Activated T-helper 1 cell treated with anti-CD3 and anti-CD28 coated beads, Interleukin-12 subunit alpha, Interleukin-12 subunit beta, Interleukin-2, Interleukin-4 antibody, amounts not matched to agents 30 ng/mL and 10 ng/mL and 1 ng/mL, durations not matched to agents 14 hours and 24 hours and 36 hours (primary cell): ENCODE measurements at regions of chr4 and their contacts with region 1.

Region 1: DNA sequence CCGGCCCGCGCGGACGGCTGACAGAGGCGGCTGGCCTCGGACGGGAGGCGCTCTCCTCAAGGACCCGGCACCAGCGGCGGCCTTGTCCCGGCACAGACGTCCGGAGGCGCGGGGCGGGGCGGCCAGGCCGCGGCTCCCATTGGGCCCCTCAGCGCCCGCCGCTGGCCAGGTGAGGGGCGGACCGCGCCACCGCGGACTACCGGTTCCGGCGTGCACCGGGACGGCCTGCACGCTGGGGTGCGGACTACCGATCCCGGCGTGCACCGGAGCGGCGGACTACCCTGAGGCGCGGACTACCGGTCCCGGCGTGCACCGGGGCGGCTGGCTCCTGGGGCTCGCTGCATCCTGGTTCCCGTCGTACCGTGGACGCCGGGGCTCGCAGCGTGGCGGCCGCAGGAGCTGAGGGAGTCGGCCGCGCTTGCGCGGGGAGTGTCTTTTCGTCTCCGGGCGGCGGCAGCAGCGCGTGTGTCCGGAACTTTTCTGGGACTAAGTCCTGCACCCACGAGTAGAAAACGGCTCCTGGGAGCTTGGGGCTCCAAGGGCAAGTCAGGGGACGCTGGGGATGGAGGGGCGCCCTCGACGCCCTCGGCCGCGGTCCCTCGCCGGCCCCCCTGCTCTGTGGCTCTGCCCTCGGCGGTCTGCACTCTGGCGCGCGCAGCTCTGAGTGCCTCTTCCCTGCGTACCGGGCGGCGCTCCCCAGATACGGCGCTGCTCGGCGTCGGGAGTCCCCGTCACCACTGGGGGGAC is at the start of gene LETM1:
- DNase-seq: peak; percentile 95
- H3K4me3 Mint-ChIP-seq: peak within 1 kb of the TSS; percentile 87
- H3K27ac Mint-ChIP-seq: peak within 1 kb of the TSS; percentile 68
- H3K4me1 Mint-ChIP-seq: peaks cover 34% of the 10 kb centered on the region
- H3K27me3 Mint-ChIP-seq: no peaks in the 10 kb centered on the region
- total RNA-seq, gene LETM1: 93.9 and 101 TPM in 2 replicates

Region 2: GRCh38 chr4:1249148-1249730 is 607.0 kb before region 1 on chr4:
- intact Hi-C with region 1: loop called (anchors 5 kb)
- DNase-seq: peak; percentile 83
- H3K4me3 Mint-ChIP-seq: peak overlapping the region; percentile 89
- H3K27ac Mint-ChIP-seq: peak overlapping the region; percentile 96
- H3K4me1 Mint-ChIP-seq: peaks cover 57% of the 10 kb centered on the region
- H3K27me3 Mint-ChIP-seq: no peaks in the 10 kb centered on the region

Region 3: GRCh38 chr4:1721004-1721665 is 135.1 kb before region 1 on chr4 and contains the starts of genes TACC3 and TMEM129:
- intact Hi-C with region 1: loop called (anchors 1 kb)
- DNase-seq: peak; percentile 90
- H3K4me3 Mint-ChIP-seq: peak within 1 kb of the TSS; percentile 94
- H3K27ac Mint-ChIP-seq: peak within 1 kb of the TSS; percentile 97
- H3K4me1 Mint-ChIP-seq: peaks cover 45% of the 10 kb centered on the region
- H3K27me3 Mint-ChIP-seq: no peaks in the 10 kb centered on the region
- total RNA-seq, gene TACC3: 134 and 139 TPM in 2 replicates
- total RNA-seq, gene TMEM129: 27.4 and 28.4 TPM in 2 replicates

Region 4: DNA sequence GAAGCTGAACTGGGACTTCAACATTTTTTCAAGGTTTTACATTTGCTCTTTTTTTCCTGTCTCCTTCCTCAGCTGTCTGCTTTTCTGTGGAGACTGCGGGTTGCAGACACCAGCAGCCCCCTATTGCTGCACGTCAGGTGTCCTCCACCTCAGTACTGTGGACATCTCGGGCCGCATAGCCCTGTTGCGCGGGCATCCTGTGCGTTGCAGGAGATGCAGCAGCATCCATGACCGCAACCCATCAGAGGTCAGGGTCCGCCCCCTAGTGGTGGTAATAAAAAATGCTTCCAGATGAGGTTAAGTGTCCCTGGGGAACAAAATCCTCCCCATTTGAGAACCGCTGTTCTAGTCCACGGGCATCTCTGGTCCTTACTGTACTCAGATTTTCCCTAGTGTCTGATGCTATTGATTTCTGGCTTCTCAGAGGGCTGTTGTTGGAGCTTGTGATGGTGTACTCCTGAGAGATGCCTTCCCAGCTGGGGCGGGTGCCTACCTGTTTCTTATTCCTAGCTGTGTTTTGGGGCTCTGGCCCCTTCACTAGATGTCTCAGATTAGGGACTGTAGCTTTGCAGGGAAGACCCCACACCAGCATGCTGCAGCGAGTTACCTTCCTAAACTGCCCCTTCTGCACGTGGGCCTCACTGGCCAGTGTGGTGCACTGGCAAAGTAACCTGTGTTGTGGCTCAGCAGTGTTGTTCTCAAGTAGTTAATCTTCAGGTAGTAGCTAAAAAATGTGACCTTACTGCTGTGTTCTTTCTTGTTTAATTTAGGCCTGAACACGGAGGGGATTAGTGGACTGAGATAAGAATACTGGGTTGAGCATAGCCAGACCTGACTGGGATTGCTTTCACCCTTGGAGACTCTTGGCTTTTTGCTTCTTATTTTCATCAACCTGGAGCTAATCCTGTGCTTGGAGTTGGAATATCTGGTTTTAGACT is 43.2 kb after region 1 on chr4:
- intact Hi-C with region 1: loop called (anchors 1 kb)
- DNase-seq: peak; percentile 69
- H3K4me3 Mint-ChIP-seq: no peak overlapping the region
- H3K27ac Mint-ChIP-seq: peak overlapping the region; percentile 87
- H3K4me1 Mint-ChIP-seq: peaks cover 56% of the 10 kb centered on the region
- H3K27me3 Mint-ChIP-seq: no peaks in the 10 kb centered on the region

Region 5: GRCh38 chr4:2008875-2009703 is 152.9 kb after region 1 on chr4 and contains the start of gene NELFA:
- intact Hi-C with region 1: loop called (anchors 1 kb)
- DNase-seq: peak; percentile 91
- H3K4me3 Mint-ChIP-seq: peak within 1 kb of the TSS; percentile 92
- H3K27ac Mint-ChIP-seq: peak within 1 kb of the TSS; percentile 88
- H3K4me1 Mint-ChIP-seq: peaks cover 31% of the 10 kb centered on the region
- H3K27me3 Mint-ChIP-seq: peaks cover 18% of the 10 kb centered on the region
- total RNA-seq, gene NELFA: 52.9 and 55.4 TPM in 2 replicates

Region 6: GRCh38 chr4:2418650-2419571 is 562.7 kb after region 1 on chr4 and contains the start of gene CFAP99:
- intact Hi-C with region 1: loop called (anchors 1 kb)
- DNase-seq: peak; percentile 94
- H3K4me3 Mint-ChIP-seq: peak within 1 kb of the TSS; percentile 85
- H3K27ac Mint-ChIP-seq: peak within 1 kb of the TSS; percentile 82
- H3K4me1 Mint-ChIP-seq: peaks cover 39% of the 10 kb centered on the region
- H3K27me3 Mint-ChIP-seq: peaks cover 55% of the 10 kb centered on the region
- total RNA-seq, gene CFAP99: not detected in 2 replicates